Breast epithelium (tissue), 4 donors: ENCODE measurements at regions of chr7 and their contacts with region 1.

Region 1: GRCh38 chr7:153524070-153524601 is 528.1 kb upstream of the DPP6 start:
- DNase-seq: peak in 1 of 2 donors; percentile 85
- H3K4me3 ChIP-seq: peak overlapping the region in 1 of 3 donors; percentile 25
- H3K27ac ChIP-seq: peak overlapping the region; percentile 67 to 80
- H3K4me1 ChIP-seq: no peaks in the 10 kb centered on the region
- H3K27me3 ChIP-seq: no peaks in the 10 kb centered on the region
- CTCF ChIP-seq: no peak
- POLR2A ChIP-seq: no peak

Region 2: DNA sequence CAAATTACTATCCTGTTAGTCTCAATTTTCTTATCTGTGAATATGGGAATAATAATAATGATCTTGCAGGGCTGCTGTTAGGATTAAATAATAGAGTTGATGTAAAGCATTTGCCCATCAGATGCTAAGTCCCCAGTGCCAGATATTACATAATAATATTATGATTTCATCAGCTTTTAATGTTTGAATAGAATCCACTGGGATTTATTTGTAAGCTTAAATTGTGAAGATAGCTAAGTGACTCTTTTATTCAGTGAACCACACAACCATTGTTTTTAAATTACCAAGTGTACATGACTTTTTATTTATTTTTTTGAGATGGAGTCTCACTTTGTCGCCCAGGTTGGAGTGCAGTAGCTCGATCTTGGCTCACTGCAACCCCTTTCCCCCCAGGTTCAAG is 17.8 kb after region 1 on chr7:
- intact Hi-C with region 1: no loop called
- DNase-seq: no peak
- H3K4me3 ChIP-seq: no peak overlapping the region
- H3K27ac ChIP-seq: no peak overlapping the region
- H3K4me1 ChIP-seq: no peaks in the 10 kb centered on the region
- H3K27me3 ChIP-seq: no peaks in the 10 kb centered on the region
- CTCF ChIP-seq: no peak
- POLR2A ChIP-seq: no peak

Region 3: DNA sequence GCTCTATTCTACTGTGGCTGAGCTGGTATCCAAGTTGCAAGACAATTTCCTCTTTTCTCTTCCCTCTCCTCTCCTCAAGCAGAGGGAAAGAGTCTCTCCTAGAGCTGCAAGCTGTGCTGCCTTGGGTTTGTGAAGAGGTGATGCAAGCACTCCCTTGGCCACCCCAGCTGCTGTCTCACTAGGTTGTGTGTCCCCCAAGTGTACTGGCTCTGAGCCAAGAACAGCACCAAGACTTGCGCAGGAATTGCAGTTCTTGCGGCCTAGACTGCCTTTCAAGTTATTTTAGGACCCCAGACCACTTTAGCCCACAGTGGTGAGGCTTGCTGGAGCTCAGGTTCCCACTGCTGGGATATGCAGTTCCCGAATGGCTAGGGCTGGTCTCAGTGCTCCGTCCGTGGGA is 939.7 kb after region 1 on chr7:
- intact Hi-C with region 1: loop called (anchors 5 kb)
- DNase-seq: no peak
- H3K4me3 ChIP-seq: no peak overlapping the region
- H3K27ac ChIP-seq: no peak overlapping the region
- H3K4me1 ChIP-seq: no peaks in the 10 kb centered on the region
- H3K27me3 ChIP-seq: no peaks in the 10 kb centered on the region
- CTCF ChIP-seq: no peak
- POLR2A ChIP-seq: no peak